Mammary epithelial cell (primary cell): ENCODE measurements at regions of chr15 and their contacts with region 1.

Region 1: DNA sequence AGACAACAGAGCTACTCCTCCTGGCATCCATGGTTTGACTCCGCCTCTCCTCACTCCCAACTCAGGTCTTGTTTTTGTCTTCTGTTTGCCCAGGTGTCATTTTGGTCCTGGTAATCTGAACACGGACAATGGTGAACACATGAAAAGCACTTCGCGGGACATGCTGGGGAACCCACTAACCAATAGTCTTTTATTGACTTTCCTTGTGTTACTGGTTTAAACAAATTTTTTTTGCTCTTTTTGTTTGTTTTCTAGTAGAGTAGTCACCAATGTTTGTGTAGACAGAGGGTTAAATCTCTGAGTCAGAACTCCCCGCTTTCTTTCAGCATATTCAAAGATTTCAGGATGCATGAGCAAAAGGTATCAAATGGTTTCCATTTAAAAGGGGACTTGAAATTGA is 38.3 kb downstream of the LARP6 start:
- DNase-seq: no peak
- H3K4me3 ChIP-seq: no peak overlapping the region
- H3K27ac ChIP-seq: no peak overlapping the region
- H3K4me1 ChIP-seq: peaks cover 12% of the 10 kb centered on the region
- H3K27me3 ChIP-seq: no peaks in the 10 kb centered on the region
- CTCF ChIP-seq: no peak

Region 2: GRCh38 chr15:70569091-70569621 is 246.5 kb before region 1 on chr15:
- CTCF ChIA-PET with region 1: no interaction called
- dilution Hi-C with region 1: no loop called
- in situ Hi-C with region 1: no loop called
- intact Hi-C with region 1: loop called (anchors 10 kb)
- DNase-seq: peak; percentile 54
- H3K4me3 ChIP-seq: no peak overlapping the region
- H3K27ac ChIP-seq: no peak overlapping the region
- H3K4me1 ChIP-seq: peaks cover 13% of the 10 kb centered on the region
- H3K27me3 ChIP-seq: no peaks in the 10 kb centered on the region
- CTCF ChIP-seq: peak; percentile 48 to 68

Region 3: GRCh38 chr15:70679919-70680231 is 135.8 kb before region 1 on chr15:
- CTCF ChIA-PET with region 1: no interaction called
- dilution Hi-C with region 1: no loop called
- in situ Hi-C with region 1: loop called (anchors 10 kb)
- intact Hi-C with region 1: loop called (anchors 1 kb)
- DNase-seq: no peak
- H3K4me3 ChIP-seq: no peak overlapping the region
- H3K27ac ChIP-seq: no peak overlapping the region
- H3K4me1 ChIP-seq: no peaks in the 10 kb centered on the region
- H3K27me3 ChIP-seq: no peaks in the 10 kb centered on the region
- CTCF ChIP-seq: no peak

Region 4: DNA sequence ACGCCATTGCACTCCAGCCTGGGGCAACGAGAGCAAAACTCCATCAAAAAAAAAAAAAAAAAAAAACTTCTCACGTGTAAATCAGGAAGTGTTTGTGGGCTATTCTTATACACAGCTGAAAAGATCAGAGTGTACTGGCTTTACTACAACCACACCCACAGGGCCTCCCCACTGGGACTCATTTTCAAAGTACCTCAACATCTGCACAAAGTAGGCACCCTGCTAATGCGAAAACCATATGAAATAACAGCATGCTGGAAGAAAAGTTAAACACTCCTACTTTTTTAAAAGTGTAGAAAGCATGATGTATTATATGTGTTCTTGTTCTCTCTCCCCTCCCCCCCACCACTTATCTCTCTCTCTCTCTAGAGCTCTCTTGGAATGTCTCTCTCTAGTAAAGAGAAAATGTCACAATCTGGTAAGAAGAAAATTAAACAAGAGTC is 63.4 kb before region 1 on chr15:
- CTCF ChIA-PET with region 1: interaction called, 5 read pairs
- dilution Hi-C with region 1: no loop called
- in situ Hi-C with region 1: no loop called
- intact Hi-C with region 1: loop called (anchors 2 kb)
- DNase-seq: no peak
- H3K4me3 ChIP-seq: no peak overlapping the region
- H3K27ac ChIP-seq: no peak overlapping the region
- H3K4me1 ChIP-seq: peaks cover 3% of the 10 kb centered on the region
- H3K27me3 ChIP-seq: no peaks in the 10 kb centered on the region
- CTCF ChIP-seq: no peak

Region 5: DNA sequence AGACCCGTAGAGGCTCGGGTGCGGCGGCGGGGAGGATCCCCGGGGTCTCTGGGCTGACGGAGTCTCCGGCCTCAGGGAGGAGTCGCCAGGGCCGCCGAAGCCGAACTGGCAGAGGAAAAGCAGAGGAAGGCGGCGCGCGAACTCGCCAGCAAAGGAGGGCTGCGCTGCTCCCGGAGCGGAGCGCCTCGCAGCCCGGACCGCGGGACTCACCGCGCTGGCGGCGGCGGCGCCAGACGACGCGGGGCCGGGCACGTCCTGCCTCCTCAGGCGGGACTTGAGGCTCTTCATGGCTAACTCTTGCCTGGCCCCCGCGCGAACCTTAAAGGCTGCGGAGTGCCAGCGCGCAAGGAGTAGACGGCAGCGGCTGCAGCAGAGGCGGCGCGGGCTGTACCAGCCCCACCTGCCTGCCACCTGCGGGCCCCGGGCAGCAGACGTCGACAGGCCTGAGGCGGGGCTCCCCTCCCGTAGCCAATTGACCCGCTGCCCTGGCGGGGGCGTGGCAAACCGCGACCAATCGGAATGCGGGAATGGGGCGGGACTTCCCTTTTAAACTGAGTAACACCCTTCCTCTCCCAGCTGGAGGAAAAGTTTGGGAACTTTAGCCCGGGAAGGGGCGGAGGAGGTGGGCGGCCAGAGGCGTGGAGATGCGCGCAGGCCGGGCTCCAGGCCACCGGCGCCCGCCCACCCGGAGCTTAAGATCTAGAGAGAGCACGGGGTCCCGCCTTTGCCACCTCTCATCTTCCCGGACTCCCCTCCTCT is 52.3 kb before region 1 on chr15 and contains the start of gene UACA:
- CTCF ChIA-PET with region 1: no interaction called
- dilution Hi-C with region 1: no loop called
- in situ Hi-C with region 1: no loop called
- intact Hi-C with region 1: loop called (anchors 1 kb)
- DNase-seq: peak; percentile 98
- H3K4me3 ChIP-seq: peak within 1 kb of the TSS; percentile 74 to 94 (median 91)
- H3K27ac ChIP-seq: peak within 1 kb of the TSS; percentile 82
- H3K4me1 ChIP-seq: peaks cover 13% of the 10 kb centered on the region
- H3K27me3 ChIP-seq: no peaks in the 10 kb centered on the region
- CTCF ChIP-seq: no peak
- total RNA-seq, gene UACA: 19.2 to 39.6 TPM

Region 6: DNA sequence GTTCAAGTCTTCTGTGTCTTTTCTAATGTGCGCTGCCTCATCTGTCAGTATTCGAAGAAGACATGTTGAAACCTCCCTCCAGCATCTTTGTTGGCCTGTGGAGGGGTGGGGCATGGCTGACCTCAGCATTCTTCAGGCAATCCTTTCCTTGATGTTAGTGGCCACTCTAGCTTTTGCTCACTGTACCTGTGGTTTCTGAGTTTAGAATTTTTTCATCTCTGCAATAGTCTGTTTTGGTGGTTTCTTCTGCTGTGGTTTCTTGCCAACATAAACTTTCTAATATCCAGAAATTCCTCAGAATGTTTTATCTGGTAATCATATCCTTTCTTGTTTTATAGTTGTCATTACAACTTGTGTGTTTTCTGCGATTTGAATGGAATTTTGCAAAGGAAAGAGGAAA is 743.5 kb after region 1 on chr15:
- CTCF ChIA-PET with region 1: no interaction called
- dilution Hi-C with region 1: no loop called
- in situ Hi-C with region 1: no loop called
- intact Hi-C with region 1: no loop called
- DNase-seq: peak; percentile 89
- H3K4me3 ChIP-seq: peak overlapping the region in 2 of 3 experiments; percentile 29 to 30
- H3K27ac ChIP-seq: peak overlapping the region; percentile 86
- H3K4me1 ChIP-seq: peaks cover 56% of the 10 kb centered on the region
- H3K27me3 ChIP-seq: no peaks in the 10 kb centered on the region
- CTCF ChIP-seq: no peak